CD4-positive, alpha-beta memory T cell (primary cell): ENCODE measurements at regions of chr10 and their contacts with region 1.

Region 1: DNA sequence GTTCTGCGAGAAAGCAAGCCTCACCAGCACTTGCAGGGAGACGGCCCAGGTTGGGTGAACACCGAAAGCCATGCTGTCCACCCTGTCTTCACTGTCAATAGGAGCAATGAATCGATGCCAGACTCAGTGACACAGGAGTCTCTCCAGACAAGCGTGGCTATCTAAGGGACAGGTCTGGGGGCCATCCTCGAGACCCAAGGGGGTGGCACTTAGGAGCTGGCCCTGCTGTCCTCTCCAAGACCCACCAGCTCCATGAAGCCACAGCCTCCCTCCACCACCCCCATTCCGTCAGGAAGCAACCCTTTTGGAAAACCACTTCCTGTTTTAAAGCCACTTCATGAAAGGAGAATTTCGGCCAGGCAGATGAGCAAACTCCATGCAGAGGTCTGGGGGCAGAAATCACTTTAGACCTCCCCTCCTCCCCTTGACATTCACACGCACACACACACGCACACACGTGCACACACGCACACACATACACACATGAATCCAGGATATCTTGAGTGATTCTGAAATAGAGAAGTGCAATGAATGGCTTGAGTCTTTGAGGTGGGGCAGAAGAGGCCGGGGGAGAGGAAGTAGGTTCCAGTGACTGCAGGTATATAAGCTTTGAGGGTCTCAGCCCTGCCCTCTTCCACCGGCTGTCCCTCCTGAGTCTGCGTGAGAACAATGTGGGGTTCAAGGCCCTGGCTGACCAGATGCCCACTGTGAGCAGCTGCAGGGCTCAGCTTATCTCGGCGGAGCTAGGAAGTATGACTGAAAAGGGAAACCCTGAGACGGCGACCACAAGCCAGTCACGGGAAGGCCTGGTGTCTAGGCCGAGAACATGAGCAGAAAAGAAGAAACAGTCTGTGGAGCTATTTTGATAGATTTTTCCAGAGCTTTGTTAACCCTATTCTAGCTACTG is 25.0 kb downstream of the RGS10 start:
- DNase-seq: peak; percentile 27 to 78 (median 45)
- H3K4me3 ChIP-seq: peak overlapping the region; percentile 23 to 36
- H3K4me3 Mint-ChIP-seq: peak overlapping the region; percentile 50 to 82 (median 79)
- H3K27ac ChIP-seq: peak overlapping the region; percentile 70
- H3K27ac Mint-ChIP-seq: peak overlapping the region; percentile 88 to 97 (median 95)
- H3K4me1 ChIP-seq: peaks cover 60% of the 10 kb centered on the region
- H3K4me1 Mint-ChIP-seq: peaks cover 22 to 63% (median 47%) of the 10 kb centered on the region in 4 donors
- H3K27me3 ChIP-seq: no peaks in the 10 kb centered on the region
- H3K27me3 Mint-ChIP-seq: no peaks in the 10 kb centered on the region

Region 2: DNA sequence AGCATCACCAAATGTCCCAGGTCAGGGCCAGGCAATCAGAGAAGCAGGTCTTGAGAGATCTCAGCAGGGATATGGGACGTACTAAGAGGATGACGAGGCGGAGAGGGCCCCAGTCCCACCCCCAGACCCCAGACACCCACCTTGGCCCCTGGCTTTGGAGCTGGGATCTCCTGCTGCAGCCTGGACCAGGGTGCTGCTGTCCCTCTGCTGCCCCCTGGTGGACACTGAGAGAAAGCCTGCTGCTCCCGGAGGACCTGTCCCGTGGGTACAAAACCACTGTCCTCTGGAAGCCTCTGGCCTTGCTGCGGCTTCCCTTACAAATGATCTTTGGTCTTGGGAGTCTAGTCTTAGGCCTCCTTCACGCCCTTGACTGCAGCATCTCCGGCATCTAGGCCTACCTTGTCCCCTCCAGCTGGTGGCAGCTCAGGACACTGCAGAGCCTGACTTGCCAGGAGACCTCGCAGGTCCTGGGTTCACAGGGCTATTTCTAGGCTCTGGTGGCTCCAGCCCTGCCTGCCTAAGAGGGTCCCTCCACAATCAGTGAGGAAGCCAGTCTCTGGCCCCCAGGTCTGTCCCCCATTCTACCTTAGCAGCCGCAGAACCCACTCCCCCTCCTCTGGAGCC is 72.1 kb before region 1 on chr10:
- CTCF ChIA-PET with region 1: interaction called, 13 read pairs
- POLR2A ChIA-PET with region 1: interaction called, 4 read pairs
- intact Hi-C with region 1: no loop called
- DNase-seq: peak; percentile 72 to 79 (median 76)
- H3K4me3 ChIP-seq: no peak overlapping the region
- H3K4me3 Mint-ChIP-seq: peak overlapping the region in 1 of 8 donors; percentile 22
- H3K27ac ChIP-seq: no peak overlapping the region
- H3K27ac Mint-ChIP-seq: peak overlapping the region in 3 of 7 donors; percentile 43 to 65 (median 48)
- H3K4me1 ChIP-seq: peaks cover 6% of the 10 kb centered on the region
- H3K4me1 Mint-ChIP-seq: peaks cover 1 to 13% (median 8%) of the 10 kb centered on the region in 4 donors
- H3K27me3 ChIP-seq: no peaks in the 10 kb centered on the region
- H3K27me3 Mint-ChIP-seq: no peaks in the 10 kb centered on the region

Region 3: DNA sequence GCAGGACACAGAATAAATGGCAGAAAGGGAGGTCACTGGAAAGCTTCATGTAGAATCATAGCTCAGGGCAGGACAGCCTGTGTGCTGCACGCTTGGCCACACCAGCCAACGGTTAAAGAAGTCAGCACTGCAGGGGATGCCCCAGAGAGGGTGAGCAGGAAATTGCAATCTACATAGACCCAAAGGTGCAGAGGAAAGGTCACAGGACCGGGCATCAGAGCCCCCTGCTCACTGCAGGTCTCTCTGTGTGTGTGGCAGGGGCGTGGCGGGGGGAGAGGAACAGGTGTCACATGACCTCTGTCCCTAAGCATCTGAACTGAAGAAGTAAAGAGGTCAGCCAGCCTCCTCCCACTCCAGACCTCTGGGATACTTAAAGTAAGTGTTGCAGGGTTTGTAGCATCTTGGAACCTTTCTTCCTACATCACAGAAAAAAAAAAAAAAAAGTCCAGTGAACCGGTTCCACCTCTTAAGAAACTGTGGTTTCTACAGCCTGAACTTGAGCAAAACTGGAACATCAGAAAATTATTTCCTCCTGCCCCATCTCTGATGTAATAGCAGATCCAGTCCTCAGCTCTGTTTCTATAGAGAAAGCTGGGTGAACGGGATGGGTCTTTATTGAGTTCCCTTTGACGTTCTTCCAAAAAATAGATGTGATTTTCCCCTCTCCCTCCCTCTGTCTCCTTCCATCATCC is 39.2 kb before region 1 on chr10:
- CTCF ChIA-PET with region 1: no interaction called
- POLR2A ChIA-PET with region 1: interaction called, 10 read pairs
- intact Hi-C with region 1: loop called (anchors 5 kb)
- DNase-seq: peak in 4 of 5 donors; percentile 33 to 45 (median 36)
- H3K4me3 ChIP-seq: peak overlapping the region in 1 of 2 donors; percentile 13
- H3K4me3 Mint-ChIP-seq: peak overlapping the region; percentile 26 to 85 (median 71)
- H3K27ac ChIP-seq: peak overlapping the region; percentile 11
- H3K27ac Mint-ChIP-seq: peak overlapping the region; percentile 64 to 90 (median 88)
- H3K4me1 ChIP-seq: peaks cover 30% of the 10 kb centered on the region
- H3K4me1 Mint-ChIP-seq: peaks cover 24 to 38% (median 30%) of the 10 kb centered on the region in 4 donors
- H3K27me3 ChIP-seq: no peaks in the 10 kb centered on the region
- H3K27me3 Mint-ChIP-seq: no peaks in the 10 kb centered on the region

Region 4: GRCh38 chr10:119489991-119490326 is 27.5 kb before region 1 on chr10:
- CTCF ChIA-PET with region 1: interaction called, 4 read pairs
- POLR2A ChIA-PET with region 1: interaction called, 33 read pairs
- intact Hi-C with region 1: no loop called
- DNase-seq: no peak
- H3K4me3 ChIP-seq: peak overlapping the region in 1 of 2 donors; percentile 51
- H3K4me3 Mint-ChIP-seq: peak overlapping the region; percentile 18 to 92 (median 88)
- H3K27ac ChIP-seq: peak overlapping the region; percentile 68
- H3K27ac Mint-ChIP-seq: peak overlapping the region; percentile 82 to 97 (median 95)
- H3K4me1 ChIP-seq: peaks cover 45% of the 10 kb centered on the region
- H3K4me1 Mint-ChIP-seq: peaks cover 25 to 50% (median 33%) of the 10 kb centered on the region in 4 donors
- H3K27me3 ChIP-seq: no peaks in the 10 kb centered on the region
- H3K27me3 Mint-ChIP-seq: no peaks in the 10 kb centered on the region

Region 5: DNA sequence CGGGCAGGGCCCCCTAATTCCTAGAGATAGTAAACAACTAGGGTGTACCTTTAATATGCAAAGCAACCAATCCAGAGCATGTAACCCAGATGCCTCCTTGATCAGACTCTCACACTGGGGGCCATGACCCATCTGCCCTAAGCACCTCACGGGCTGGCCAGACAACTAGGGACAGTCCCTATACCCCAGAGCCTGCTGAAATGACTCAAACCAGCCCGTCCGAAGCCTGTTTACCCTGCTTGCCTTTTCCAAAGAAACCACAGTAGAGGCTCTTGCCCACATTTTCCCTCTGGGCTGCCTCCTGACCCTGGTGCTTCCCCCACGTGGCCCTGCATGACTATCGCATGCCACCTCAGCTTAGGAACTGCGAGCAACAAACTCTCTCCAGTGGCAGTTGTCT is 21.2 kb before region 1 on chr10:
- CTCF ChIA-PET with region 1: interaction called, 6 read pairs
- POLR2A ChIA-PET with region 1: interaction called, 68 read pairs
- intact Hi-C with region 1: no loop called
- DNase-seq: no peak
- H3K4me3 ChIP-seq: no peak overlapping the region
- H3K4me3 Mint-ChIP-seq: no peak overlapping the region
- H3K27ac ChIP-seq: no peak overlapping the region
- H3K27ac Mint-ChIP-seq: peak overlapping the region; percentile 66 to 83 (median 81)
- H3K4me1 ChIP-seq: peaks cover 66% of the 10 kb centered on the region
- H3K4me1 Mint-ChIP-seq: peaks cover 40 to 79% (median 64%) of the 10 kb centered on the region in 4 donors
- H3K27me3 ChIP-seq: no peaks in the 10 kb centered on the region
- H3K27me3 Mint-ChIP-seq: no peaks in the 10 kb centered on the region